GM18951 (cell line): ENCODE measurements at regions of chr16 and their contacts with region 1.

Region 1: DNA sequence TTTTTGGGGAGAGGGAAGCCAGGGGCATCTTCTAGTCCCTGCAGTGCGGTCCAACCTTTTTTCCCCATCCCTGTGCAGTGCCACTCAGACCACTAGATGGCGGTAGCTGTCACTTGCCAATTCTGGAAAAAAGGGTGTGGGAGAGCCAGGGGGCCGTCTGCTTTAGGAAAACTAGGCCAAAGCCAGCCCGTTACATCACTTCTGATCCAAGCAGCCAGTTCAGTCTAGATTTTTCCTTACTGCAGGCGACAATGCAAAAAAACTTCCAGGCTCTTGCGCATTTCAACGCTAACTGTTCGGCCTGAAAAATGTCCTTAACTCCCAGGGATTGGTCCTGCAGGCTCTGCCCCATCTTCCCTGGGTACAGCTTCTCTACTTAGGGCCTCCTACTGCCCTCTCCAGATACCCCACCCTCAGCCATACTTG is 69.2 kb upstream of the CES5A start:
- POLR2A ChIP-seq: no peak

Region 2: DNA sequence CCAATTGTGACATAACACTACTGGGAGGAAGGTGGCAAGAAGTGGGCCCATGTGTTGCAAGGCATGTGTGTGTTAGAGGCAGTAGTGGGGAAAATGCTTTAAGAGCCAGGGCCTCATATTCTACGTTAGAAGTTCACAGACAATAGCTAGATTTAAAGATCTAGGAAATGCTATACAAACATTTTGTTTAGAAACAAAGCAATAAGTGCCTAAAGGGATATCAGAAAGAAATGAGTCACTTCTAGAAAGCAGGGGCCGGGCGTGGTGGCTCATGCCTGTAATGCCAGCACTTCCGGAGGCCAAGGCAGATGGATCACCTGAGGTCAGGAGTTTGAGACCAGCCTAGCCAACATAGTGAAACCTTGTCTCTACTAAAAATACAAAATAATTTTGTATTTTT is 1266.8 kb before region 1 on chr16:
- in situ Hi-C with region 1: no loop called
- POLR2A ChIP-seq: no peak

Region 3: GRCh38 chr16:55613613-55614335 is 330.6 kb before region 1 on chr16:
- in situ Hi-C with region 1: no loop called
- POLR2A ChIP-seq: no peak

Region 4: DNA sequence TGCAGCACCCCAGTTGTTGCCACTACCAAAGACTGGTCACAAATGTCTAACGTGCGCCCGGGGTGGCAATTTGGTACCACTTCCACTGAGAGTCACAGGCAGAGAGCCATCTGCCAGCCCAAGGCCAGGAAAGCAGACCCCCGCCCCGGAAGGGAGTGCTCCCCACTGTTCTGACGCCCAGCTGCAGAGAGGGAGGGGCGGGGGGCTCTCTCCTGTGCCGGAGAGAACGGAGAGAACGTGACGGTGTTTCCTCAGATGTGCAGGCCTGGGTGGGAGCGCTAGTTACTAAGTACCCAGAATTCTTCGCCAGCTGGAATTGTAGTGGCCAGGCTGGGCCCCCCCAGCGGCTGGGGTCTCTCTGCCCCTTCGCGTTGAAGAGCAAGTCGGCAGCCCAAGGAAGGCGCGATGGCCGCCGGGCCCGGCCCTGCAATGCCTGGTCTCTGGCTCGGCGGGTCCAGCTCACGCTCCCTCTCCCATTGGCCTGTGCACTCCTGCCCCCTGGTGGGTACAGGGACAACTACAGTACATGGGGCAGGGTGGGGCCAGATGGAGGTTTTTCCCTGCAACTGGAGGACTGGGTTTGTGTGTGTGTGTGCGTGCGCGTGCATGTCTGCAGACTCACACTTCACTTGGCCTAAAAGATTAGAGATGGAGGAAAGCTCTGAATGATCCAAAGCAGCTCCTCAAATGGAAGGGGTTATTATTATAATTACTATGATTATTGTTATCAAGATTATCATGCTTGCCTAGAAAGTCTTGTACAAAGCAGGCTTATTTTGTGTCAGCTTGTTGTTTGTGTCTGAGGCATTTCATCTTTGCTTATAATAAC is 373.8 kb after region 1 on chr16:
- in situ Hi-C with region 1: loop called (anchors 10 kb)
- POLR2A ChIP-seq: no peak